Dorsolateral prefrontal cortex (tissue), 120 donors: ENCODE measurements at regions of chr19 and their contacts with region 1.

Region 1: DNA sequence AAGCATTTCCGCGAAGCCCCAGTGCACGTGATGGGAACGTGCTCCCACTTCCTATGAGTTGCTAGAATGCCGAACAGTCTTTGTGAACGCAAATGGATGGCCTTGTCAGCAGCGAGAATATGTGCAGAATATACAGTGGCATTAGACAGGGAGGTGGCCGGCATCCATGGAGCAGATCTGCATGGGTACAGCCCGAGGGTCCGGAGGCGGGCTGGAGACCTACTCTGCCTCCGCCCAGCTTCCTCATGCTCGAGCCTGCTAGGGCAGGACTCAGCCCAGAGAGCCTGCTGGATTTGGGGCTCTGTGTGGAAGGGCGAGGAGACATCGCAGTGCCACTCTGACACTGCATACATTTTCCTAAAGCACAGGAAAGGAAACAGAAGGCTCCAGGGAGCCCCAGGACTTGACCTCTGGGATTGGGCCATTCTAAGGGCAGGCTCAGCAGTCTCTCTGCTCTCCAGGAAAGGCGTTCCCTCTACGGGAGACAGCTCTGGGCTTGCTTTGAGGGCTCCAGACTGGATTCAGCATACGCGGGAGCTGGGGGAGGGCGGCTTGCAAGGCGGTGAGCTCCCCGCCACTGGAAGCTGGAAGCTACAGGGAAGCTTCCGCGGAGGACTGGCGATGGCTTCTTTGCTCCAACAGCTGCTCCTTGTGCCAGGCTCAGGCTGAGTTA is 55.9 kb upstream of the UQCRFS1 start:
- DNase-seq: peak in 1 of 10 donors; percentile 9
- H3K4me3 ChIP-seq: no peak overlapping the region
- H3K27ac ChIP-seq: no peak overlapping the region
- H3K27me3 ChIP-seq: peaks cover 0 to 12% (median 0%) of the 10 kb centered on the region in 45 donors
- CTCF ChIP-seq: no peak

Region 2: DNA sequence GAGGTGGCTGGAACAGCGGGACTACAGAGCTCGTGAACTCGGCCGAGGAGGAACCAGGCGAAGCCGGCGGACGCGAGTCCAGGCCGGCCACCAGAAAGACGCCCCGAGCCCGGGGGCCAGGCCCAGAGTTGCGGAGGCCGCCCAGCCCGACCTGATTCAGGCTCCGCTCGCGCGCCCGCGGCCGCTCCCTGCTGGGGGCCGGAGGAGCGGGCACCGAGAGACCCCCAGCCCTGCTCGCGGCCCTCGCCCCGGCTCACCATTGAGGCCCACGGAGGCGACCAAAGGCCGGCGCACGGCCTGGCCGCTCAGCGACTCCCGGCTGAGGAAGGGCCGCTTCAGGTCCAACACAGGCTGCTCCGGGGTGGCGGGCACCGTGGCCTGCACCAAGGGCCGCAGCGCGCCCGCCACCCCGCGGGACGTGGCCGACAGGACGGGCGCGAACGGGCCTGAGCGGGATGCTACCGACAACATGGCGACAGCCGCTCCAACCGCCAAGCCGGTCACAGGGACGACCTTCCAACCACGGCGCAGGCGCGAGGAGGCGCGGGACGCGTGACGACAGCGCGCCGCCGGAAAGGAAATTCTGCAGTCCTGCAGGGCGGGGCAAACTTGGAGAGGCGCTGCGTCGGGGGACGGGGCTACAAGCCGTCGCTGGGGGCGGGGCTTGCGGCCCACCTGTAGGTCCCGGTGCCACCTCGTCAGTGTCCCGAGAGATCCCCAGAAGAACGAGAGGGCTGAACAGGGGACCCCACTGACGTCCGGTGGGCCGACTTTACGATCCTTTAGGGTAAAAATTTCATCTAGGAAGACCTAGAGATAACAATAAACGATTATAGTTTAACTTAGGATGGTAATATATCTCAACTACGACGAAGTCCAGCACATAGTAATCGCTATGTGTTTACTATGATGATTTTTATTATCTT is 55.9 kb before region 1 on chr19 and contains the start of gene UQCRFS1:
- intact Hi-C with region 1: loop called in 1 of 2 experiments (anchors 5 kb)
- DNase-seq: peak; percentile 87 to 99 (median 92)
- H3K4me3 ChIP-seq: peak within 1 kb of the TSS; percentile 67 to 100 (median 94)
- H3K27ac ChIP-seq: peak within 1 kb of the TSS; percentile 15 to 97 (median 85)
- H3K27me3 ChIP-seq: no peaks in the 10 kb centered on the region
- CTCF ChIP-seq: peak in 31 of 56 donors; percentile 9 to 48 (median 25)
- total RNA-seq, gene UQCRFS1: 15.5 to 46.8 (median 33.1) TPM

Region 3: GRCh38 chr19:29704562-29705558 is 436.0 kb after region 1 on chr19:
- intact Hi-C with region 1: no loop called
- DNase-seq: no peak
- H3K4me3 ChIP-seq: no peak overlapping the region
- H3K27ac ChIP-seq: peak overlapping the region in 2 of 59 donors; percentile 17 to 48
- H3K27me3 ChIP-seq: no peaks in the 10 kb centered on the region
- CTCF ChIP-seq: no peak